Activated B cell treated with CpG ODN at 0.5 μM for 24 hours (primary cell): ENCODE measurements at regions of chr2 and their contacts with region 1.

Region 1: DNA sequence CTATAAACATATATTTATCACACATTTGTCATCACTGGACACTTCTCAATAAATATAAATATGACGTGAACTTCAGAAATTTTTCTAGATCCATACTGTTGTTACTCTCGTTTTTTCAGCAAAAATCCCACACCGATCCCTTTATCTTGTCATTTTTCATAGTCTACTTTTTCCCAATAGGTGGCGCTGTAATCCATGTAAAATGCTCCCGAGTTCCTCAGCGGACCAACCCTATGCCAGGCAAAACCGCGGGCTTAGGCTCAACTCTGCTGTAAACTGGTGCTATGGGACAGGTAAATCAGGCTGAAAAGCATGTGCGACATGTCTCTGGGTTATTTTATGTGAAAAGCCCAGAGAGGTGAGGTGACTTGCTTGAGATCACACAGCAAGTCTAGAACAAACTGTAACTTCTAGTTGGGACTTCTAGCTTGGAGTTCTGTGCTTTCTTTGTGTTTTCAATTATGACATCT is 104.0 kb downstream of the COBLL1 start:
- DNase-seq: peak; percentile 29
- ATAC-seq: peak; percentile 62
- H3K4me3 Mint-ChIP-seq: peak overlapping the region; percentile 21
- H3K27ac Mint-ChIP-seq: peak overlapping the region; percentile 74
- H3K4me1 Mint-ChIP-seq: peaks cover 72% of the 10 kb centered on the region
- H3K27me3 Mint-ChIP-seq: no peaks in the 10 kb centered on the region
- CTCF ChIP-seq: no peak

Region 2: GRCh38 chr2:164794432-164795231 is 57.0 kb after region 1 on chr2:
- CTCF ChIA-PET with region 1: no interaction called
- POLR2A ChIA-PET with region 1: no interaction called
- intact Hi-C with region 1: loop called (anchors 5 kb)
- DNase-seq: no peak
- ATAC-seq: no peak
- H3K4me3 Mint-ChIP-seq: peak overlapping the region; percentile 2
- H3K27ac Mint-ChIP-seq: no peak overlapping the region
- H3K4me1 Mint-ChIP-seq: peaks cover 41% of the 10 kb centered on the region
- H3K27me3 Mint-ChIP-seq: no peaks in the 10 kb centered on the region
- CTCF ChIP-seq: no peak

Region 3: GRCh38 chr2:164910101-164910899 is 172.7 kb after region 1 on chr2:
- CTCF ChIA-PET with region 1: interaction called, 81 read pairs
- POLR2A ChIA-PET with region 1: interaction called, 15 read pairs
- intact Hi-C with region 1: loop called (anchors 1 kb)
- DNase-seq: no peak
- ATAC-seq: peak; percentile 71
- H3K4me3 Mint-ChIP-seq: peak overlapping the region; percentile 32
- H3K27ac Mint-ChIP-seq: peak overlapping the region; percentile 68
- H3K4me1 Mint-ChIP-seq: peaks cover 39% of the 10 kb centered on the region
- H3K27me3 Mint-ChIP-seq: no peaks in the 10 kb centered on the region
- CTCF ChIP-seq: no peak

Region 4: DNA sequence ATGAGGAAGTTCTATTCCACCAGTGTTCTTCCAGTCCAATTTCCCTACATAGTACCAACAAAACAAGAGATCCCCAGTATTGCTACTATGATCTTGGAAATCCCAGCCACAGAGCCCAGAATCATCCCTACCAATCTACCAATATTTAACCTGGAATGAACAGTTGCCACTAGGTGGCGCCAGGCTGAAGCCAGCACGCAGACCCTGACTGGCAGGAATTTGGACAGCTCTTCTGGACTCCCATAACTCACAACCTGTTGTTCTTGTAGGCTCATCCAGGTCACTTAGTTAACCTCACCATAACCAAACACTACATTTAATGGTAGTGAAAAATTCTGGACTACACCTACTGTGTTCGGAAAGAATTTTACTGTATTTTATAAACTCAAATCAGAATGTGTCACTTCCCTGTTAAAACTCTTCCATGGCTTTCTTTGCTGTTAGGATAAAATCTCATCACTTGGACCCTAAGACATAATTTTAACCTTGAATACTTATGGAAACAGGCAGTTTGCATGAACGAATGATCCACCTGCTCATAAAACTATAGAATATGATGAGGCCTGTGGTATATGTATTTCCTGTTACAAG is 277.5 kb after region 1 on chr2:
- CTCF ChIA-PET with region 1: interaction called, 11 read pairs
- POLR2A ChIA-PET with region 1: no interaction called
- intact Hi-C with region 1: loop called (anchors 1 kb)
- DNase-seq: no peak
- ATAC-seq: peak; percentile 35
- H3K4me3 Mint-ChIP-seq: no peak overlapping the region
- H3K27ac Mint-ChIP-seq: no peak overlapping the region
- H3K4me1 Mint-ChIP-seq: no peaks in the 10 kb centered on the region
- H3K27me3 Mint-ChIP-seq: no peaks in the 10 kb centered on the region
- CTCF ChIP-seq: peak; percentile 82

Region 5: DNA sequence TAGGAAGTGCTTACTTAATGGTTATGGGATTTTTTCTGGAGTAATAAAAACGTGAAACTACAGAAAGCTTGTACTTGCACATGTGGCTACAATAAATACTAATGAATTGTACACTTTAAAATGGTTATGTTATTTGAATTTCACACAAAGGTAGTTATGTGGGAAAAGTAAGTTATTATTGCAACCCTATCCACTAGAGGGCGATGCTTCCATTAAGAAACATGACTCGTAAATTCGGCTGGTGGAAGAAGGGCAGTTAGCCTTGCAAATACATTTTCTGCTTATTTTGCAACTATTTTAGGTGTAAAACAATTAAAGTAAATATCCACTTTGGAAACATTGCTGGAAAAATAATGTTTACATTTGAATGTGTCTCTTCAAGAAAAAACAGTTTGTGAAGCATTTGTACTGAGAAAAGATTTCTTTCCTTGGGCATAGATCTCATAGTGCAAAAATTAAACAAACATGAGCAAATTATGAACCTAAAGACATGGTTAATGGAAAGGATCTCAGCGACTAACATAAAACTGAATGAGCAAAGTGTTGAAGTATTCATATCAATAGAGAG is 663.7 kb after region 1 on chr2:
- CTCF ChIA-PET with region 1: no interaction called
- POLR2A ChIA-PET with region 1: no interaction called
- intact Hi-C with region 1: loop called (anchors 10 kb)
- DNase-seq: no peak
- ATAC-seq: no peak
- H3K4me3 Mint-ChIP-seq: no peak overlapping the region
- H3K27ac Mint-ChIP-seq: no peak overlapping the region
- H3K4me1 Mint-ChIP-seq: no peaks in the 10 kb centered on the region
- H3K27me3 Mint-ChIP-seq: peaks cover 13% of the 10 kb centered on the region
- CTCF ChIP-seq: peak; percentile 45